ENCODE measurements at regions of chr1 and their contacts with region 1.

Region 1: DNA sequence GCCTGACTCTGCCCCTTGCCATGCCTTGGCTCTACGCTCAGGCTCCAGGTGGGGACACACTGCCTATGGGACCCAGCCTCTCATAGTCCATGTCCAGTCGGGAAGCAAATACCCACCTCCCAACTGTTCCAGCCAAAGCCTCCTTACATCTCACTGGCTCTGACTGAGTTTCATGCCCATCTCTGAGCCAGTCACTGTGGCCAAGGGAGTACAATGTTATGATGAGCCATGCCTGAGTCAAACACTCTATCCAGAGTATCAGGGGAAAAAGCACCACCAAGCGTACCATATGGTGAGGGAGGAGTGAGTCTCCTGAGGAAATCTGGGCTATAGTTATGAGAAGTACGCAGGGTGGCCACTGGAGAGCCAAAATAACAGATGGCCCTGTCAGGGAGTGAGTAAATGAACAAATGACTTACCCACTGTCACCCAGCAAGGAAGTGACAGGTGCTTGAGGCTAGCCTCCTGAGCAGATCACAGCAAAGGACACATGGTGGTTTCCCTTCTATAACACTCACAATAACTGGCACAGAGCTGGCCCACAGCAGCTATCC is 236.6 kb upstream of the GJB5 start:
- DNase-seq: peak in 1 of 10 donors; percentile 67

Region 2: DNA sequence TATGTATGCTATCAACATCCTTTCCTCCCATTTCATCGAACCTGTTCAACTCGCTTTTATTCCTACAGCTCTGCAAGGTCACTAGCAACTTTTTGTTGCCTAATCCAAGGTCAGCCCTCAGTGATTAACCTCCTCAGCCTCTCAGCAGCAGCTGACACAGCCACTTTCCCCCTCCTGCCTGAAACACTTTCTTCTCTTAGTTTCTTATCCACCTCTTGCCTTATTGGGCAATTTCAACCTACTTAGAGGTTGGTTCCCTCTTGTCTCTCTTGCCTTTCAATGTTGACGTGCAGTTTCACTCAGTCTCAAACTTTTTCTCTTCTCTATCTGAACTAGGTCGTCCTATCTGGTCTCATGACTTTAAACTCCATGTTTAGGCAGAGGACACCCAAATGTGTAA is 185.2 kb before region 1 on chr1:
- intact Hi-C with region 1: loop called (anchors 10 kb)
- DNase-seq: no peak

Region 3: DNA sequence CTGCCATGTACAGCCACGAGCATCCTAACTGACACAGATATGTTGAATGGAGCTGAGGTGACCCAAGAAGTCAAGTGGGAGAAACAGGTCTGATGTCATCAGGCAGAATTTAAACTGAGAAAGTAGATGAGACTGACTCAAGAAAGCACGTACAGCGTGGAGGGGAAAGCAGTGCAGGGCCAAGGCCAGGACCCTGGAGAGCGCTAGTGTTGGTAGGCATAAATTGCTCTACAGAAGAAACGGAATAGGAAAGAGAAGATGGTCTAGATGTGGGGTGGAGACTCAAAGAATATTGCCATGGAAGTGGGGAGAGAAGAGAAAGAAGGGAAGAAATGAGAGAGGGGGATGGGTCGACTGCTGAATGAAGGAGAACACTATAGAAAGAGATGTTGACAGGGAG is 191.3 kb after region 1 on chr1:
- intact Hi-C with region 1: no loop called
- DNase-seq: no peak